Calu3 (cell line): ENCODE measurements at regions of chr1 and their contacts with region 1.

Region 1: GRCh38 chr1:219990782-219991510 is 55.4 kb downstream of the EPRS1 start:
- DNase-seq: peak; percentile 22
- H3K4me3 Mint-ChIP-seq: peak overlapping the region; percentile 16
- H3K27ac Mint-ChIP-seq: peak overlapping the region; percentile 10
- H3K4me1 Mint-ChIP-seq: peaks cover 54% of the 10 kb centered on the region
- H3K27me3 Mint-ChIP-seq: no peaks in the 10 kb centered on the region
- CTCF ChIP-seq: peak; percentile 61

Region 2: GRCh38 chr1:219771080-219771479 is 219.9 kb before region 1 on chr1:
- CTCF ChIA-PET with region 1: no interaction called
- intact Hi-C with region 1: no loop called
- DNase-seq: peak; percentile 78
- H3K4me3 Mint-ChIP-seq: no peak overlapping the region
- H3K27ac Mint-ChIP-seq: peak overlapping the region; percentile 55
- H3K4me1 Mint-ChIP-seq: peaks cover 32% of the 10 kb centered on the region
- H3K27me3 Mint-ChIP-seq: no peaks in the 10 kb centered on the region
- CTCF ChIP-seq: no peak

Region 3: GRCh38 chr1:219837274-219837993 is 153.5 kb before region 1 on chr1:
- CTCF ChIA-PET with region 1: no interaction called
- intact Hi-C with region 1: loop called (anchors 2 kb)
- DNase-seq: peak; percentile 55
- H3K4me3 Mint-ChIP-seq: peak overlapping the region; percentile 10
- H3K27ac Mint-ChIP-seq: no peak overlapping the region
- H3K4me1 Mint-ChIP-seq: peaks cover 20% of the 10 kb centered on the region
- H3K27me3 Mint-ChIP-seq: peaks cover 45% of the 10 kb centered on the region
- CTCF ChIP-seq: peak; percentile 57

Region 4: GRCh38 chr1:220038640-220039039 is 47.7 kb after region 1 on chr1:
- CTCF ChIA-PET with region 1: no interaction called
- intact Hi-C with region 1: no loop called
- DNase-seq: no peak
- H3K4me3 Mint-ChIP-seq: no peak overlapping the region
- H3K27ac Mint-ChIP-seq: peak overlapping the region; percentile 6
- H3K4me1 Mint-ChIP-seq: peaks cover 14% of the 10 kb centered on the region
- H3K27me3 Mint-ChIP-seq: no peaks in the 10 kb centered on the region
- CTCF ChIP-seq: no peak

Region 5: GRCh38 chr1:220089650-220090556 is 99.0 kb after region 1 on chr1 and contains the start of gene BPNT1:
- CTCF ChIA-PET with region 1: interaction called, 4 read pairs
- intact Hi-C with region 1: loop called (anchors 2 kb)
- DNase-seq: peak; percentile 97
- H3K4me3 Mint-ChIP-seq: peak within 1 kb of the TSS; percentile 86
- H3K27ac Mint-ChIP-seq: peak within 1 kb of the TSS; percentile 60
- H3K4me1 Mint-ChIP-seq: peaks cover under 1% of the 10 kb centered on the region
- H3K27me3 Mint-ChIP-seq: no peaks in the 10 kb centered on the region
- CTCF ChIP-seq: no peak
- total RNA-seq, gene BPNT1: 46.9 and 49.9 TPM in 2 replicates

Region 6: GRCh38 chr1:220123889-220124288 is 132.9 kb after region 1 on chr1:
- CTCF ChIA-PET with region 1: interaction called, 8 read pairs
- intact Hi-C with region 1: loop called (anchors 5 kb)
- DNase-seq: peak; percentile 35
- H3K4me3 Mint-ChIP-seq: no peak overlapping the region
- H3K27ac Mint-ChIP-seq: no peak overlapping the region
- H3K4me1 Mint-ChIP-seq: peaks cover 31% of the 10 kb centered on the region
- H3K27me3 Mint-ChIP-seq: no peaks in the 10 kb centered on the region
- CTCF ChIP-seq: peak; percentile 44

Region 7: GRCh38 chr1:220217383-220217988 is 226.5 kb after region 1 on chr1:
- CTCF ChIA-PET with region 1: interaction called, 4 read pairs
- intact Hi-C with region 1: loop called (anchors 5 kb)
- DNase-seq: peak; percentile 44
- H3K4me3 Mint-ChIP-seq: no peak overlapping the region
- H3K27ac Mint-ChIP-seq: no peak overlapping the region
- H3K4me1 Mint-ChIP-seq: no peaks in the 10 kb centered on the region
- H3K27me3 Mint-ChIP-seq: no peaks in the 10 kb centered on the region
- CTCF ChIP-seq: no peak

Region 8: DNA sequence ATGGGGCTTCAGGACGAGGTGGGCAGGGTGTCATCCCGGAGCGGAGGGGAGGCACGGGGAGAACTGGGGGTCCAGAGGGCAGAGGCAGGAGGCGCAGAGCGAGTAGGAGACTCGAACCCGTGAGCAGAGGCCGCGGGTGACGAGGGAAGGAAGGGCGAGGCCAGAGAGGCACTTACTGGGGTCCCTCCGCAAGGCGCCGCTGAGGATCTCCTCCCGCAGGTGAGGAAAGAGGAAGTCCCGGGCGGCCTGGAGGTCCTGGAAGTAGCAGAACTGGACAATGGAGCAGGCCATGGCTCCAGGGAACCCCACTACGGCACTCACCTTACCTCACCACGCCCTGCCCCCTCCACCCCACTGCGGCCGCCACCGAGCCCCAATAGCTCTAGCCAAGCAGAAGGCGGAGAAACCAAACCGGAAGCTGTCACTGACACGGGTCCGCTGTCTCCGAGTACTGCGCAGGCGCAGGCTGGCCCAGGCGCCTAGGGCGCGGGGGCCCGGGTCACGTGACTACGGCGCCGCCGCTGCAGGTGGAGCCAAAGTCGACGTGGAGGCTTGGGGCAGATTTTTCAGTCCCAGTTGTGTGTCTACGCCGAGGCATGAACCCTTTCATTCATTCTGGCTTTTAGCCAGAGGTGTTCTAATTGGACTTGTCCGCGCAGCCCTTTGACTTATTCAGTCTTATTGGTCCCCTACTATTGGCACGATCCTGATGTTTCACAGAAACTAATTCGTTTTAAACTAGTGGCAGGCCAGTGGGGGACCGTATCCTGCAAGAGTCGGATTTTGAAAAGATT is 281.3 kb after region 1 on chr1 and contains the start of gene RAB3GAP2:
- CTCF ChIA-PET with region 1: no interaction called
- intact Hi-C with region 1: loop called (anchors 10 kb)
- DNase-seq: peak; percentile 98
- H3K4me3 Mint-ChIP-seq: no peak within 1 kb of the TSS
- H3K27ac Mint-ChIP-seq: no peak within 1 kb of the TSS
- H3K4me1 Mint-ChIP-seq: no peaks in the 10 kb centered on the region
- H3K27me3 Mint-ChIP-seq: peaks cover 30% of the 10 kb centered on the region
- CTCF ChIP-seq: no peak
- total RNA-seq, gene RAB3GAP2: 43.2 and 48.0 TPM in 2 replicates

Region 9: DNA sequence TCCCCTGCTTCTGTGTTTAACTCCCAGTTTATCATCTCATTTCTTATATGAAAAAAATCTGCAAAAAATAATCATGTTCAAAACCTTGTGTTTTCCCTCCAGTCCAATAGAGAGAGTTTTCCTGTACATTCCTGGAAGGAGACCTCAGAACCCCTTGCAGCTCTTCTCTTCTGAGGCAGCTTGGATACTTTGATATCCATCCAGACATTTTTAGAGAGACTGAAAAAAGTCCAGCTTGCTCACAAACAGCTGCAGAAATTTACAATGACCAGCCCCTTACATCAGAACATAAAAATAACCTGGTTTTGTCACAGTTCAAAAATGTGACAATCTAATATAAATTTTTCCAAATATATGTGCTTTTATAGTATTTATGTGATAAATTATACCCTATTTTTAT is 625.9 kb after region 1 on chr1:
- CTCF ChIA-PET with region 1: no interaction called
- intact Hi-C with region 1: no loop called
- DNase-seq: no peak
- H3K4me3 Mint-ChIP-seq: no peak overlapping the region
- H3K27ac Mint-ChIP-seq: no peak overlapping the region
- H3K4me1 Mint-ChIP-seq: no peaks in the 10 kb centered on the region
- H3K27me3 Mint-ChIP-seq: no peaks in the 10 kb centered on the region
- CTCF ChIP-seq: no peak